ENCODE measurements at regions of chr4 and their contacts with region 1.

Region 1: DNA sequence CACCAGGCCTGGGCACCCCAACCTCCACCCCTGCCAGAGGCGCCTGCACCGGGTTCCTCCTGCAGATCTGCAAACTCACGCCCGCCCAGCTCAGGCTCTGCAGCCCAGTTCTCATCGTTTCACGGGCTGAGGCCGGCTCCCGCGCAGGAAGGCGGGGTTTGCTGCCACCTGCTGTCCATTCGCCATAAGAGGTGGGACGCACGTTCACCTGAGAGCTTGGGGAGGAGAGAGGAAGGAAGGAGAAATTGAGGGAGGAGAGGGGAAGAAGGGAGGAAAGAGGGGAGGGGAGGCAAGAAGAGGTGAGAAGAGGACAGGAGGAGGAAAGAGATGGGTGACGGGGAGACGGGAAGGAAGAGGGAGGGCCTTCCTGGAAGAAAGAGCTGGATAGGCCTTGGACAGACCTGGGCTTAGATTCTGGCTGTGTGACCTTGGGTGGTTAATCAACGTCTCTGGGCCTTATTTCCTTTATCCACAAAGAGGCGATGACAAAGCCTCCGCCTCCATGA is 114.5 kb downstream of the ADRA2C start:
- DNase-seq: peak; percentile 81 to 91 (median 91)
- H3K4me3 ChIP-seq: no peak overlapping the region
- H3K27ac ChIP-seq: no peak overlapping the region
- H3K4me1 ChIP-seq: peaks cover 0 to 20% (median 17%) of the 10 kb centered on the region in 4 experiments
- H3K27me3 ChIP-seq: peaks cover 8 to 58% (median 15%) of the 10 kb centered on the region in 5 experiments

Region 2: DNA sequence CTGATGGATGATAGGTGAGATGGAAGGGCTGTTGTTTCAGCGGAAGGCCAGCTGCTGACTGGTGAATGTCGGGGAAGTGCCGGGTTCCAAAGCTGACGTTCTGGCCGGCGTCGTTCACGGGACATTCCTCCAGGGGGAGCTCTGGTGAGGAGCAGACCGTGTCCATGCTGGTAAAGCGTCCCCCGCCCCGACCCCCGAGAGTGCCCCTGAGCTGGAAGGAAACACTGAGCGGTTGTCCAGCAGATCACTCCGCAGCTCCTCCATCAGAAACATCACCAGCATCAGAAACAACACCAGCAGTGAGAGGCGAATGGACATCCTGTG is 133.1 kb before region 1 on chr4:
- CTCF ChIA-PET with region 1: interaction called, 11 read pairs
- POLR2A ChIA-PET with region 1: no interaction called
- DNase-seq: no peak
- H3K4me3 ChIP-seq: no peak overlapping the region
- H3K27ac ChIP-seq: no peak overlapping the region
- H3K4me1 ChIP-seq: no peaks in the 10 kb centered on the region
- H3K27me3 ChIP-seq: peaks cover 0 to 90% (median 27%) of the 10 kb centered on the region in 5 experiments

Region 3: GRCh38 chr4:3765271-3766040 is 115.2 kb before region 1 on chr4:
- CTCF ChIA-PET with region 1: interaction called, 12 read pairs
- POLR2A ChIA-PET with region 1: no interaction called
- DNase-seq: peak in 2 of 3 donors; percentile 45 to 47
- H3K4me3 ChIP-seq: peak overlapping the region in 5 of 7 experiments; percentile 6 to 61 (median 23)
- H3K27ac ChIP-seq: no peak overlapping the region
- H3K4me1 ChIP-seq: peaks cover 0 to 15% (median 6%) of the 10 kb centered on the region in 4 experiments
- H3K27me3 ChIP-seq: peaks cover 0 to 90% (median 17%) of the 10 kb centered on the region in 5 experiments

Region 4: DNA sequence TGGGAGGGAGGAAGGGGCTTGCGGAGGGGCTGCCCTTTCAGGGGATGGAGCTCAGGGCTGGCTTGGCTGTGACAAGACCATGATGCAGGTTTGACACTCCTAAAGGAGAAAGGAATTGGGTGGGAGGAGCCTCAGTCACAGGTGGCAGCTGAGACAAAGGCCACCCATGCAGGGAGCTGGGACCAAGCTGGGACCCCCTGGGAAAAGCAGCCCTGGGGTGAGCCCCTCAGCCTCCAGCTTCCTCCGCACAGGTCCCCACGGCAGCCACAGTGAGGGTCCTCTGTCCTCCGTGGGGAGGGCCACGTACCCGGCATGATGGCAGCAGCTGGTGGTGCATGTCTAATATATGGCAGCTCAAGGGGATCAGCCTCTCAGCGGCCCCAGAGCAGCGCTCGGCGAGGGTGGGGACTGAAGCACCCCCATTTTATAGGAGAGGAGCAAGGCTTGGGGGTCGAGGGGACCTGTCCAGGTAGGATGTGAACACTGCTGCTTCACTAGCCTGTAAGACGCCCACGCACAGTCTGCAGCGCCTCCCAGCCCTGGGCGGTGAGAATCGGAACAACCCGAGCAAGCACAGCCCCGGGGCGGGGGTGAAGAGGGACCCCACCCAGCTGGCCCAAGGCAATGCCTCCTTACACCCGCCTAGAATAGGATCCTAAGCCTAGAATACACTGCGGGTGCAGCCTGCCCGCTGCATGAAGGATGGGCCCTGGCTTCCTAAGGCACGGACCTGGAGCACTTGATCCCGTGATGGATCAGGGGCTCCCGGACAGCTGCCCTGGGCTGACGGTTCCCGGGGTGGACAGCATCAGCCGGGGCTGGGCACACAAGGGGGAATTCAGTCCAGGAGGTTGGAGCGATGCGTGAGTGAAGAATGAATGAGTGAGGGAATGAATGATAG is 97.0 kb before region 1 on chr4:
- CTCF ChIA-PET with region 1: no interaction called
- POLR2A ChIA-PET with region 1: no interaction called
- DNase-seq: peak in 2 of 3 donors; percentile 15 to 19
- H3K4me3 ChIP-seq: no peak overlapping the region
- H3K27ac ChIP-seq: no peak overlapping the region
- H3K4me1 ChIP-seq: no peaks in the 10 kb centered on the region
- H3K27me3 ChIP-seq: peaks cover 0 to 32% (median 0%) of the 10 kb centered on the region in 5 experiments